GM10248 (cell line): ENCODE measurements at regions of chr15 and their contacts with region 1.

Region 1: DNA sequence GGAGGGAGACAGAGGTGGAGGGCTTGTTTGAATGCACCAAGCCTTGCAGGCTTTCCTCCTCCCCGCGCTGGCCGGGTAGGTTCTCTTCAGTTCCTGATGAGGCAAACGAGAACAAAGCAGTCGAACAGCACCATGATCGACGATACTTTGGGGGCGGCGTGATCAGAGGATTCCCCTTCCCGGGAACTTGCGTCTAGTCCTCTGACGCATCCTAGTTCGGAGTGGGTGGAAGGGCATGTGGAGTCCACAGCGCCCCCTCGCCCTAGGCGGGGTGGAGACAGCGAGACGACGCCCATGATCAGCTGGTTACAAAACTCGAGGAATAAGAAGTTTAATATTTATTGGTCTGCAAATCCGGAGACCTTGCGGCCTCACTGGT is 452 bp upstream of the SV2B start:
- DNase-seq: peak; percentile 43
- CTCF ChIP-seq: peak; percentile 24

Region 2: DNA sequence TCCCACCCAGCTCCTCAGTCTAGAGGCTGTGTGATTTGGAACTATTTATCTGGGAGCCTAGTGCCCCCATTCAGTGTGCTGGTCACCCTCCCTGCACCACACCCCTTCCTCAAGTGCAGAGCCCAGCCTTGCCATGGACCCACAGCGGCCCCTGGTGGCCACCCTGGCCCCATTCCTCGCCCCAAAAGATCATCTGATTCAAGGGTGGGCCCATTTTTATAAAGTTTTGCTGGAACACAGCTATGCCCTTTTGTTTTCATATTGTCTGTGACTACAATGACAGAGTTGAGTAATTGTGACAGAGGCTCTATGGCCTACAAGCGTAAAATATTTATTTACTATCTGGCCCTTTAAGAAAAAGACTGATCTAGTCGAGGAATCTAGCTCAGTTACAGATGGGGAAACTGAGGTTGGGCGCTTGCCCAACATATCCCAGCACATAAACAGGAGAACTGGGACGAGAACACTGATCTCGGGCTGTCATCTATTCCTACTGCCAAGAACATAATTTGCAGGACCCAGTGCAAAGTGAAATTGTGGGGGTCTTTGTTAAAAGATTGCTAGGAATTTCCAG is 213.5 kb before region 1 on chr15:
- CTCF ChIA-PET with region 1: no interaction called
- POLR2A ChIA-PET with region 1: no interaction called
- DNase-seq: peak; percentile 80
- CTCF ChIP-seq: peak; percentile 90

Region 3: DNA sequence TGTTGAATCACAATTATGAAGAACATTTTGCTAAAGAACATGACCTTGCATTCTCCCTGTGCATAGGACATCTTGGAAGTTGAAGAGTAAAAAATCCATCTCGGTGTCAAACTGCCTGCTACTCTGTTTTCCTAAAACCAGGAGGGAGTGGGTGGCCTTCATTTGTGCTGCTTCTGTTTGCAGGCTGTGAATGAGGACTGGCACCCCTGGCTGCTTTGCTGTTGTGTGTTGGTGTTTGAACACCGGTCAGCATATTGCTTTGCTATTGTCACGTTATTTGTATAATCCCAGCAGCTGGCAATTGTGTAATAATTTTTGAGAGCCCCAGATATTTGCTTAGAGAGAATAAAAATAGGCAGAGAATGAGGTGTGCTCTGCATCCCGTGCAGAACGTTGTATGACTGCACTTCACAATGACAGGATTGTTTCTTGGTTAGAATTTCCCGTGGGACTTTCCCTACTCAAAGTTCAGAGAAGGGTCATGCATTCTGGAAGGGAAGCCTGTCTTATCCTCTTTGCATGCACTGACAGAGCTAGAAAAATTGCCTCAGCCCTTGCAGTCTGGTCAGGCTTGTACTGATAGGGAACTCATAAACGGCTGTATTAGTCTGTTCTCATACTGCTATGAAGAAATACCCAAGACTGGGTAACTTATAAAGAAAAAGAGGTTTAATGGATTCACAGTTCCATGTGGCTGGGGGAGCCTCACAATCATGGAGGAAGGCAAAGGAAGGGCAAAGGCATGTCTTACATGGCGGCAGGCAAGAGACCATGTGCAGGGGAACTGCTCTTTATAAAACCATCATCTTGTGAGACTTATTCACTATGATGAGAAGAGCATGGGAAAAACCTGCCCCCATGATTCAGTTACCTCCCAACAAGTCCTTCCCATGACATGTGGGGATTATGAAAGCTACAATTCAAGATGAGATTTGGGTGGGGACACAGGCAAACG is 16.8 kb after region 1 on chr15:
- CTCF ChIA-PET with region 1: interaction called, 27 read pairs
- POLR2A ChIA-PET with region 1: interaction called, 3 read pairs
- DNase-seq: peak; percentile 75
- CTCF ChIP-seq: no peak

Region 4: GRCh38 chr15:91126080-91126479 is 26.5 kb after region 1 on chr15:
- CTCF ChIA-PET with region 1: interaction called, 10 read pairs
- POLR2A ChIA-PET with region 1: interaction called, 4 read pairs
- DNase-seq: no peak
- CTCF ChIP-seq: no peak

Region 5: DNA sequence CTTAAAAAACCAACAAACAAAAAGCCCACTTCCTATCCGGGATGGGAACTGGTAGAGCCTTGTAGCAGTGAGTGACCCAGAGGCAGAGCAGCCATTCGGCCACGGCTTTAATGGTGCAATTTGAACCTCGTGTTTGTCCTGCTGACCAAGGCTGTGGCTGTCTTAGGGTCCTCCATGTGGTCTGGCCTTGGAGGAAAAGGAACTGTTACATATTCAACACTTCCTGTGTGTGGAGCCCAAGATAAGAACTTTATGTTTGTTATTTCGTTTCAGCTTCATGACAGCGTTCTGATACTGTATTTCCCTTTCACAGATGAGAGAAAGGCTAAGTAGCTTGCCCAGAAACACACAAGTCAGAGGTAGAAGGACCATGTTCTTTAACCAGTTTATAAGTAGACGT is 270.2 kb after region 1 on chr15:
- CTCF ChIA-PET with region 1: no interaction called
- POLR2A ChIA-PET with region 1: no interaction called
- DNase-seq: no peak
- CTCF ChIP-seq: no peak